ENCODE measurements at regions of chr5 and their contacts with region 1.

Region 1: GRCh38 chr5:115296124-115297022 is at the start of gene CCDC112:
- H3K4me3 Mint-ChIP-seq: peak within 1 kb of the TSS; percentile 95
- H3K27ac Mint-ChIP-seq: peak within 1 kb of the TSS; percentile 84
- H3K4me1 Mint-ChIP-seq: peaks cover 45% of the 10 kb centered on the region
- H3K27me3 Mint-ChIP-seq: peaks cover 2% of the 10 kb centered on the region

Region 2: DNA sequence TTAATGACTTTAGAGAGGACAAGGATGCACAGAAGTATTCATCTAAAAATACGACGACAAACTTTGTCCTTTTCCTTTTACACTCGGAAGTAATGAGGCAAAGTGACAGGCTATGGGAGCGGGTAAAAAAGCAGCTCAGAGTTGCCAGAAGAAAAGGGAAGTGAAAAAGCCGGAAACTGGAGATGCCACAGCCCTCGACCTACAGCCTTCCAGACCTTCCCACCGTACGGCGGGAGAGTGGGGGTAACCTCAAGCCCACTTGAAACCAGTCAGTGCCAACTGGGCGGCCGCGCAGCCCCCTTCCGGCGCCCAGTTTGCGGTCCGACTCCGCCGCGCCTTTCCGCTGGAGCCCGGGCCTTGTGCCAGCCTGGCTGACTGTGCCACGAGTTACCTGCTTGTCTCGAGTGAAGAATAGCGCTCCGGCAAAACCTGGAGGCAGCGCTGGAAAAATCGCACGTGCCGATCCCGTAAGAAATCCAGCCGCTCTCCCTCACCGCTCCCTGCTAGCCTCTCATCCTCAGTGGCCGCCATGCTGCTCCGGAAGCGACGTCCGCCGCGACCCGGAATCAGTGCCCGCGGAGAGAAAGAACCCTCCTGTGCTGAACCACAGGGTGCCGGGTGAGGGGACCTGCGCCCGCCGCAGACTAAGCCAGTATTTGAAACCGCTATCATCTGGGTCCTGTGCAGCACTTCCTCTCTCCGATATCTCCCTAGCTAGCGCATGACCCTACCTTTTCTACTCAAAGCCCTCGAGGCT is 33.9 kb before region 1 on chr5 and contains the start of gene PGGT1B:
- intact Hi-C with region 1: loop called (anchors 5 kb)
- H3K4me3 Mint-ChIP-seq: peak within 1 kb of the TSS; percentile 76
- H3K27ac Mint-ChIP-seq: peak within 1 kb of the TSS; percentile 100
- H3K4me1 Mint-ChIP-seq: peaks cover 49% of the 10 kb centered on the region
- H3K27me3 Mint-ChIP-seq: no peaks in the 10 kb centered on the region

Region 3: DNA sequence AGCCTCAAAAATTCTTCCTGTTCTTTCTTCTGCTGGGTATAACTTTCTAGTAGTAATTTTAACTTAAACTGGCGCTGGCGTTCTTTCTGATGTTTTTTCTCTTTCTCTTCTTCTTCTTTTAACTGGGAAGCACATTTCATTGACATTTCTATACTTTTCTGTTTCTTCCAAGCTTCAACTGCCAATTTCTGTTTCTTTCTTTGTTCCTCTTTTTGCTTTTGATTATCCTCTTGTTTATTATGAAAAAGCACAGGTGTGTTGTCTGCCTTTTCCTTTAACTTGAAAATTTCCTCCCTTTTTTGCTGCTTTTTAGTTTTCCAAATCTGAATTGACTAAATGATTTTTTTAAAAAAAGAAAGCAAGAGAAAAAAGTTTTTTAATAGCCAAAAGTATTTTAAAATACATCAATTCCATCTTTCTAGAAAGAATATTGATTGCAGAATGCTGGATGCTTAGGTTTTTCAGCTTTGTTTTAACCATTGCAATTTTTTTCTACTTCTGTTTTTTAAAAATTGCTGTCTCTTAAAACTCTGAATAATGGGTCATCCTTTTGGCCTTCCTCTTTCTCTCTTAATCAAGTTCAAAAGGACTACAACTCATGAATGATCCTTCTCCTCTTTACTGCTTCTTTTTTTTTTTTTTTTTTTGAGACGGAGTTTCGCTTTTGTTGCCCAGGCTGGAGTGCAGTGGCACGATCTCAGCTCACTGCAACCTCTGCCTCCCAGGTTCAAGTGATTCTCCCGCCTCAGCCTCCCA is 24.9 kb before region 1 on chr5:
- intact Hi-C with region 1: loop called (anchors 1 kb)
- H3K4me3 Mint-ChIP-seq: peak overlapping the region; percentile 63
- H3K27ac Mint-ChIP-seq: peak overlapping the region; percentile 83
- H3K4me1 Mint-ChIP-seq: peaks cover 43% of the 10 kb centered on the region
- H3K27me3 Mint-ChIP-seq: no peaks in the 10 kb centered on the region

Measured in dendritic cell treated with granulocyte-macrophage colony-stimulating factor and Interleukin-4, amounts not matched to agents 40 ng/mL and 50 ng/mL, for 4 days (primary cell).